ENCODE measurements at regions of chr9 and their contacts with region 1.

Region 1: GRCh38 chr9:82421498-82421897 is 432.9 kb downstream of the SPATA31D1 start:
- DNase-seq: no peak
- CTCF ChIP-seq: no peak

Region 2: GRCh38 chr9:82410305-82410704 is 11.2 kb before region 1 on chr9:
- CTCF ChIA-PET with region 1: interaction called, 10 read pairs
- POLR2A ChIA-PET with region 1: no interaction called
- DNase-seq: no peak
- CTCF ChIP-seq: no peak